ENCODE measurements at regions of chr18 and their contacts with region 1.

Region 1: GRCh38 chr18:61502472-61502871 is 169.2 kb downstream of the CDH20 start:
- DNase-seq: peak; percentile 58
- H3K4me3 Mint-ChIP-seq: no peak overlapping the region
- H3K27ac Mint-ChIP-seq: no peak overlapping the region
- H3K4me1 Mint-ChIP-seq: no peaks in the 10 kb centered on the region
- H3K27me3 Mint-ChIP-seq: peaks cover 2% of the 10 kb centered on the region

Region 2: GRCh38 chr18:61093965-61094364 is 408.5 kb before region 1 on chr18:
- intact Hi-C with region 1: loop called (anchors 10 kb)
- DNase-seq: no peak
- H3K4me3 Mint-ChIP-seq: no peak overlapping the region
- H3K27ac Mint-ChIP-seq: no peak overlapping the region
- H3K4me1 Mint-ChIP-seq: no peaks in the 10 kb centered on the region
- H3K27me3 Mint-ChIP-seq: no peaks in the 10 kb centered on the region

Region 3: GRCh38 chr18:61322265-61322873 is 180.1 kb before region 1 on chr18:
- intact Hi-C with region 1: loop called (anchors 2 kb)
- DNase-seq: peak; percentile 82
- H3K4me3 Mint-ChIP-seq: no peak overlapping the region
- H3K27ac Mint-ChIP-seq: no peak overlapping the region
- H3K4me1 Mint-ChIP-seq: no peaks in the 10 kb centered on the region
- H3K27me3 Mint-ChIP-seq: no peaks in the 10 kb centered on the region

Measured in activated CD4-positive, alpha-beta T cell treated with anti-CD3 and anti-CD28 coated beads, Interleukin-2, amount 10 ng/mL, durations not matched to agents 24 days and 14 days (primary cell).